ENCODE measurements at regions of chr10 and their contacts with region 1.

Region 1: DNA sequence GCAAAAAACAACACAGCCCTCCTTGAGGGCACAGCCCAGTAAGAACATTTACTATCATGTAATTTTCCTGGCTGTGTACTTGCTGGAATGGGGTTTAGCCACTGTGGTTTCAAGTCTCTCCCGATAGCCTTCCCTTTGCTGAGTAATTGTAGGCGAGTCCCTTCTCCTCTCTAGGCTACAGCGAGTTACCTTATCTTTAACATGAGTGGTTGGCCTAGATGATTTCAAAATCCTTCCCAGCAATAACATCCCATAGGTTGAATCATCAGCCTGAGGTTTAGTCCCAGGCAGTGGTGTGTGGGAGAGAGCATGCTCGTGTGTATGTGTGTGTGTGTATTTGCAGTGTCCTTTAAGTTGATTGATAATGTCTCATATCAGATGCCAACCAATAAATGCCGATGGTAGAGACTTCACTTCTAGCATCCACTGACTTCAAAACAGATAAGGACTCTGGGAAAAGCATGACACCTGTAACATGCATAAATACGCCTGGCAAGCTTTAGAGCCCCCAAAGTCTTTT is 142.9 kb upstream of the ZMIZ1 start:
- DNase-seq: peak; percentile 56 to 97
- H3K4me3 ChIP-seq: no peak overlapping the region
- H3K27ac ChIP-seq: peak overlapping the region; percentile 88
- H3K4me1 ChIP-seq: peaks cover 79% of the 10 kb centered on the region
- H3K27me3 ChIP-seq: no peaks in the 10 kb centered on the region
- CTCF ChIP-seq: no peak

Region 2: GRCh38 chr10:78623578-78624215 is 302.2 kb before region 1 on chr10:
- CTCF ChIA-PET with region 1: no interaction called
- POLR2A ChIA-PET with region 1: no interaction called
- intact Hi-C with region 1: loop called (anchors 5 kb)
- DNase-seq: peak; percentile 43 to 93
- H3K4me3 ChIP-seq: no peak overlapping the region
- H3K27ac ChIP-seq: peak overlapping the region; percentile 70
- H3K4me1 ChIP-seq: peaks cover 39% of the 10 kb centered on the region
- H3K27me3 ChIP-seq: no peaks in the 10 kb centered on the region
- CTCF ChIP-seq: no peak

Region 3: DNA sequence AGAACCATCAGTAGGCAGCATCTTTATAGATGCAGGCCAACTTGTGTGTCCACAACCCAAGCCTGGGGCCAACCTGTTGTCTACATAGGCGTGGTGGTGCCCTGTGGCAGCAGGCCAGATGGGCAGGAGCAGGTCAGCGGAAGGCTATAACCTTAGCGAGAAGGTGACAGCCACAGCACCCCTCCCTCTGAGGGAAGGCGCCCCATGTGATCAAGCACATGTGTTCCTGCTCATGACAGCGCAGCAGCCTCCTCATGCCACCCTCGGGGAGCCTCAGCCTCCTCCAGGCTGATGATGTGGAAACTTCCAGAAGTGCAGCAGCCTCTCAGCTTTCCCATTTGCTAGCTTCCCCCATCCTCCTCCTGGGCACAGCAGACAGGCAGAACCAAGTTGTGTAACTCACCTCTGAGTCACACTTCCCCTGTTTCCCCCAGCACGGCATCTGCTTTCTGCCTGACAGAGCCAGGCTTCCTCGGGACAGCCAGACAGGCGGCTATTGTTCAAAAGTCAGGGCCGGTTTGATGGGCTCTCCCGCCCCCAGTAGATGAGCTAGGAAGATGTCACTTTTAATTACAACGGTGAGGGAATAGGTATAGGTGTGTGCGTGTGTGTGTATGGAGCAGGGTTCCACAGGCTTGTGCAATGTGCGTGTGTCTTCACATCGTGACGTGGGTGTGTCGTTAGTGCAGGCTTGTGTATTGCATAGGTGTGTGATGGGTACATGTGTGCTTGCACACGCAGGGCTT is 169.1 kb before region 1 on chr10:
- CTCF ChIA-PET with region 1: no interaction called
- POLR2A ChIA-PET with region 1: no interaction called
- intact Hi-C with region 1: loop called (anchors 2 kb)
- DNase-seq: peak; percentile 86 to 96
- H3K4me3 ChIP-seq: 0 out of 2 replicates have a peak overlapping the region, but pooled peaks have one; percentile 3
- H3K27ac ChIP-seq: peak overlapping the region; percentile 41
- H3K4me1 ChIP-seq: peaks cover 32% of the 10 kb centered on the region
- H3K27me3 ChIP-seq: no peaks in the 10 kb centered on the region
- CTCF ChIP-seq: no peak

Region 4: DNA sequence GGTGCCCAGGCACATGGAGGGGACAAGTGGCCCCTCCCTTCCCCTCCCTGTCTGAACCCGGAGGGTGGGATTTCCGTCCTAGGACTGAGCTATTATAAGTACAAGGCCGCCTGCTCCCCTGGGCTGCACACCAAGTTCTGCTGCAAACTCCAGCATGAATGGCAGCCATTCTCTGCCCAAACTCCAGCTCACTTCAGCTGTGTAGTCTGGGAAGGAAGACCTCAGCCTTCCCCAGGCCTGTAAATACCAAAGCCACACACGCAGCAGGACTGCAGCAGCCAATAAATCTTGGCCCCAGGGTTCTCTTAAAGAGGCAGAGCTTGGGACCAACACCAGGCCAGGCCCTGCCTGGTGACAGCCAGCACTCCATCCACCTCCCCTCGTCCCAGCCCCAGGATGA is 148.4 kb before region 1 on chr10:
- CTCF ChIA-PET with region 1: no interaction called
- POLR2A ChIA-PET with region 1: no interaction called
- intact Hi-C with region 1: loop called (anchors 5 kb)
- DNase-seq: no peak
- H3K4me3 ChIP-seq: no peak overlapping the region
- H3K27ac ChIP-seq: no peak overlapping the region
- H3K4me1 ChIP-seq: peaks cover 20% of the 10 kb centered on the region
- H3K27me3 ChIP-seq: no peaks in the 10 kb centered on the region
- CTCF ChIP-seq: no peak

Region 5: GRCh38 chr10:78798976-78799730 is 126.7 kb before region 1 on chr10:
- CTCF ChIA-PET with region 1: no interaction called
- POLR2A ChIA-PET with region 1: no interaction called
- intact Hi-C with region 1: loop called (anchors 5 kb)
- DNase-seq: peak; percentile 40 to 68
- H3K4me3 ChIP-seq: no peak overlapping the region
- H3K27ac ChIP-seq: no peak overlapping the region
- H3K4me1 ChIP-seq: peaks cover 30% of the 10 kb centered on the region
- H3K27me3 ChIP-seq: no peaks in the 10 kb centered on the region
- CTCF ChIP-seq: no peak

Region 6: GRCh38 chr10:78964952-78965633 is 39.2 kb after region 1 on chr10:
- CTCF ChIA-PET with region 1: no interaction called
- POLR2A ChIA-PET with region 1: no interaction called
- intact Hi-C with region 1: loop called (anchors 2 kb)
- DNase-seq: peak; percentile 94 to 96
- H3K4me3 ChIP-seq: no peak overlapping the region
- H3K27ac ChIP-seq: peak overlapping the region; percentile 70
- H3K4me1 ChIP-seq: peaks cover 39% of the 10 kb centered on the region
- H3K27me3 ChIP-seq: no peaks in the 10 kb centered on the region
- CTCF ChIP-seq: no peak

Region 7: GRCh38 chr10:79022565-79023230 is 96.8 kb after region 1 on chr10:
- CTCF ChIA-PET with region 1: no interaction called
- POLR2A ChIA-PET with region 1: no interaction called
- intact Hi-C with region 1: no loop called
- DNase-seq: no peak
- H3K4me3 ChIP-seq: no peak overlapping the region
- H3K27ac ChIP-seq: no peak overlapping the region
- H3K4me1 ChIP-seq: no peaks in the 10 kb centered on the region
- H3K27me3 ChIP-seq: no peaks in the 10 kb centered on the region
- CTCF ChIP-seq: no peak

Region 8: DNA sequence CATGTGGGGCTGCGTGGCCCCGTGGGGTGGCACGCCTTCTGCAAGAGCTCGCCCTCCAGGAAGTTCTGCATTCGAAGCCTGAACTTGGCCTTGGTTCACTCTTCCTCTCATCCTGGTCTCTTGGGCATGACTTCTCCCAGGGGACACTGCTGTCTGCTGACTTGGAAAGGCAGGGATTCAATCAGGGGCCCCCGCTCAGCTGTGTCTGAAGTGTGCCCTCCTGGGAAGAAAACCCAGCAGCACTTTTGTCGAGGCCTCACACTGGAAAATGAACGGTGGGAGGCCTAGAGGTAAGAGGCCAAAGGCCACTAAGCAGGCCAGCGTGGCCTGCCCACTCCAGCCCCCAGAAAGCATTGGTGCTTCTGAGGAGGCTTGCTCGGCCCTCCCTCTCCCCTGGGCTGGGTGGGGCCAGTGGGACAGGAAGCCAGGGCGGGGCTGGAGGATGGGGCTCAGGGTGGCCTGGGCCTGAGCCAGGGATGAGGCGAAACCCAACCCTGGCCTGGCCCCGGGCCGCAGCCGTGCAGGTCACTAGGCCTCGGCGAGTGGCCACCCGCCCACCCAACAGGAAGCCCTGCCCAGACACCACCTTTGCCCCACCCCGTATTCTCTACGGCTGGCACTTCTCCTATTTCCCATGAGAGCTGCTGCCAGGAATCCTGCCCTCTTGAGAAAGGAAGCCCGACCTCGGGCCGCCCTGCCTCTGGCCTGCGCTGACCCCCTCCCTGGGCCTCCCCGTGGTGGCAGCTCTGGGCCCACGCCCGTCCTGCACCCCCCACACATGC is 224.0 kb after region 1 on chr10:
- CTCF ChIA-PET with region 1: no interaction called
- POLR2A ChIA-PET with region 1: no interaction called
- intact Hi-C with region 1: loop called (anchors 2 kb)
- DNase-seq: peak; percentile 92 to 99
- H3K4me3 ChIP-seq: peak overlapping the region; percentile 29; the same call in 1 of the 2 replicates
- H3K27ac ChIP-seq: peak overlapping the region; percentile 90
- H3K4me1 ChIP-seq: peaks cover 62% of the 10 kb centered on the region
- H3K27me3 ChIP-seq: no peaks in the 10 kb centered on the region
- CTCF ChIP-seq: no peak

Measured in PC-9 (cell line).